CD4-positive, alpha-beta T cell (primary cell): ENCODE measurements at regions of chr6 and their contacts with region 1.

Region 1: GRCh38 chr6:89371849-89372505 is 19.5 kb upstream of the UBE2J1 start:
- DNase-seq: peak; percentile 64 to 89 (median 76)
- ATAC-seq: peak; percentile 65
- H3K4me3 ChIP-seq: no peak overlapping the region
- H3K4me3 Mint-ChIP-seq: no peak overlapping the region
- H3K27ac ChIP-seq: peak overlapping the region in 1 of 2 donors; percentile 32
- H3K27ac Mint-ChIP-seq: peak overlapping the region; percentile 79
- H3K4me1 ChIP-seq: peaks cover 17% of the 10 kb centered on the region
- H3K4me1 Mint-ChIP-seq: peaks cover 27% of the 10 kb centered on the region
- H3K27me3 ChIP-seq: no peaks in the 10 kb centered on the region
- H3K27me3 Mint-ChIP-seq: no peaks in the 10 kb centered on the region
- CTCF ChIP-seq: peak; percentile 97

Region 2: DNA sequence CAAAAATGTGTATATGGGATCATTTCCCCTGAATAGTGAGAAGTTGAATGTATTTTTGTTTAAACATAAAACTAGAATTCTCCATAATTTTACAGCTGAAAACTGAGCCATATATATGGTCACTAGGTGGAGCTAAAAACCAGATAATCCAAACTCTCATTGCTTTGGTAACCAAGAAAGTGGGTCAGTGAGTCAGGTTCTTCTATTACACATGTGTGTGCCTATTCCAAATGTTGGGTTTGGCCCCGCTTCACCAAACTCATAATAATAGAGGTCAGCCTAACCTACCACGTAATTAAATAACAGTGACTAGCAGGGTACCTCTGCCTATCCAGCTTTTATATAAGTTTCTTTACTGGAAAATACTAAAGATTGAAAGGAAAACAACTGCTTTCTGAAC is 389.3 kb before region 1 on chr6:
- CTCF ChIA-PET with region 1: interaction called, 11 read pairs
- POLR2A ChIA-PET with region 1: interaction called, 5 read pairs
- intact Hi-C with region 1: loop called (anchors 1 to 2 kb)
- DNase-seq: peak in 4 of 14 experiments; percentile 24 to 79 (median 75)
- ATAC-seq: peak; percentile 89
- H3K4me3 ChIP-seq: no peak overlapping the region
- H3K4me3 Mint-ChIP-seq: no peak overlapping the region
- H3K27ac ChIP-seq: no peak overlapping the region
- H3K27ac Mint-ChIP-seq: no peak overlapping the region
- H3K4me1 ChIP-seq: no peaks in the 10 kb centered on the region
- H3K4me1 Mint-ChIP-seq: no peaks in the 10 kb centered on the region
- H3K27me3 ChIP-seq: no peaks in the 10 kb centered on the region
- H3K27me3 Mint-ChIP-seq: no peaks in the 10 kb centered on the region
- CTCF ChIP-seq: peak; percentile 82

Region 3: DNA sequence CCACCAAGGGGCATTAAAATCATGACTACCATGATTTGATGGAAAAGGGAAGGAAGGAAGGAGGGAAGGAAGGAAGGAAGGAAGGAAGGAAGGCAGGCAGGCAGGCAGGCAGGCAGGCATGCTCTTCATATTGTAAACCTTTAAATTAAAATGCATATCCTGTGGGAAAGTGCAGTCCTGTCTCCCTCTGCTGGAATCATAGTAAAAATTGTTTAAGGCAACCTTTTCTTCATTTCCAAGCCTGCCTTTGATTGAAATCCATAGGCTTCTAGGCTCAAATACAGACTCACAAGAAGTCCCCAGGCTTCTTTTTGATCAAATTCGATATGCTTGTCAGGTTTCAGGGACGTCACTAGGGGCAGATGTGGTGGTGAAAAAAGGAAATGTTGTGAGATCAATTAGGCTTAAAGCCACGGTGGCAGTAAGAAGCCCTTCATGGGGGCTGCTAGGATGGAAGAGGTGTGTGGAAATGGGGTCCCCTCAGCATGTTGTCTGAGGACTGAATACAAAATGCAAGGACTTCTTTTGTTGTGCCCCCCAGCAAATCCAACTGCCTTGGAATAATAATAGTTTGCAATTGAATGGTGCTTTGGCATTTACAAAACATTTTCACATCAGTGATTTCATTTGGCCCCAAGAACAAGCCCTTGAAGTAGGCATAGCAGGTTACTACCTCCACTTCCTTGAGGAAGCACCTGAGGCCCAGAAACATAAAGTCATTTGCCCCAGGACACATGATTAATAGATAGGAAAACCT is 129.2 kb before region 1 on chr6:
- CTCF ChIA-PET with region 1: no interaction called
- POLR2A ChIA-PET with region 1: no interaction called
- intact Hi-C with region 1: no loop called
- DNase-seq: peak in 4 of 14 experiments; percentile 11 to 54 (median 49)
- ATAC-seq: peak; percentile 34
- H3K4me3 ChIP-seq: no peak overlapping the region
- H3K4me3 Mint-ChIP-seq: no peak overlapping the region
- H3K27ac ChIP-seq: no peak overlapping the region
- H3K27ac Mint-ChIP-seq: no peak overlapping the region
- H3K4me1 ChIP-seq: peaks cover 13% of the 10 kb centered on the region
- H3K4me1 Mint-ChIP-seq: peaks cover 20% of the 10 kb centered on the region
- H3K27me3 ChIP-seq: no peaks in the 10 kb centered on the region
- H3K27me3 Mint-ChIP-seq: peaks cover 8% of the 10 kb centered on the region
- CTCF ChIP-seq: peak; percentile 38

Region 4: GRCh38 chr6:89281779-89282246 is 90.2 kb before region 1 on chr6:
- CTCF ChIA-PET with region 1: interaction called, 5 read pairs
- POLR2A ChIA-PET with region 1: no interaction called
- intact Hi-C with region 1: loop called in 1 of 2 experiments (anchors 5 kb)
- DNase-seq: peak in 7 of 14 experiments; percentile 7 to 71 (median 35)
- ATAC-seq: peak; percentile 82
- H3K4me3 ChIP-seq: no peak overlapping the region
- H3K4me3 Mint-ChIP-seq: no peak overlapping the region
- H3K27ac ChIP-seq: no peak overlapping the region
- H3K27ac Mint-ChIP-seq: no peak overlapping the region
- H3K4me1 ChIP-seq: peaks cover 3% of the 10 kb centered on the region
- H3K4me1 Mint-ChIP-seq: no peaks in the 10 kb centered on the region
- H3K27me3 ChIP-seq: no peaks in the 10 kb centered on the region
- H3K27me3 Mint-ChIP-seq: no peaks in the 10 kb centered on the region
- CTCF ChIP-seq: peak; percentile 12

Region 5: DNA sequence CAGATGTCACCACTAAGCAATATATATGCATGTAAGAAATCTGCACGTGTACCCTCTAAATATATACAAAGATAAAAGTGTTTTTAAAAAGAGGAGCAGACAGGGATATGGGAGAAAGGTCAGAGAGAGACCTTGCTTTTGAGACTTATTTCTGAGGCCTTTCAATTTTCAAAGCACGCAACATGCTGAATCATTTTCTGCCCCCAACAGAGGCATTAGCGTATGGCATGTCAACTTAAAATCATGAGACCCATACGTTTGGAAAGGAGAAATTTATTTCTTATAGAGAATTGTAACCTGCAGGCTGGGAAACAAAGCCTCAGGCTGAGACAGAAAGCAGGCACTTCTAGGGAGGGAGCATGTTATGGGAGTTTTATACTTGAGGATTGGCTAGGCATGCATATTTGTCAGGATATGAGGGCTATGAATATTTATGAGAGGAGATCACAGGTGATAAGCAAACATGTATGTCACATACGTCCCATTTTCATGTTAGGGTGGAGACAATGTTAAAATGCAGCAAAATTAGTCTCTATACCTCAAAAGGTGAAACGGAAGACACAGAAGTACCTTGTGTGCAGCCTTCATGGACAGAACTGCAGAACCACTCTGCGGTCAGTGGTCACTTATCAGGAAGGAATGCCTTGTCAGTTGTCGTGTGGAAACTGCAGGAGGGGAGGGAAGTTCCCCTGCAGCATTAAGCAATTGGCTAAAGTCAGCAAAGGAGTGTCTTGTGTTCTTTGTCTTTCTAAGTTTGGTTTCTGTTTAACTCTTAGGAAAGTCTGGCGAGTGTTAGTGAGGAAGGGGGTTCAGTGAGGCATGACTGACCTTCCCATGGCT is 50.6 kb before region 1 on chr6:
- CTCF ChIA-PET with region 1: no interaction called
- POLR2A ChIA-PET with region 1: no interaction called
- intact Hi-C with region 1: no loop called
- DNase-seq: peak in 3 of 14 experiments; percentile 13 to 53 (median 45)
- ATAC-seq: no peak
- H3K4me3 ChIP-seq: no peak overlapping the region
- H3K4me3 Mint-ChIP-seq: no peak overlapping the region
- H3K27ac ChIP-seq: no peak overlapping the region
- H3K27ac Mint-ChIP-seq: no peak overlapping the region
- H3K4me1 ChIP-seq: no peaks in the 10 kb centered on the region
- H3K4me1 Mint-ChIP-seq: peaks cover 5% of the 10 kb centered on the region
- H3K27me3 ChIP-seq: no peaks in the 10 kb centered on the region
- H3K27me3 Mint-ChIP-seq: no peaks in the 10 kb centered on the region
- CTCF ChIP-seq: no peak

Region 6: DNA sequence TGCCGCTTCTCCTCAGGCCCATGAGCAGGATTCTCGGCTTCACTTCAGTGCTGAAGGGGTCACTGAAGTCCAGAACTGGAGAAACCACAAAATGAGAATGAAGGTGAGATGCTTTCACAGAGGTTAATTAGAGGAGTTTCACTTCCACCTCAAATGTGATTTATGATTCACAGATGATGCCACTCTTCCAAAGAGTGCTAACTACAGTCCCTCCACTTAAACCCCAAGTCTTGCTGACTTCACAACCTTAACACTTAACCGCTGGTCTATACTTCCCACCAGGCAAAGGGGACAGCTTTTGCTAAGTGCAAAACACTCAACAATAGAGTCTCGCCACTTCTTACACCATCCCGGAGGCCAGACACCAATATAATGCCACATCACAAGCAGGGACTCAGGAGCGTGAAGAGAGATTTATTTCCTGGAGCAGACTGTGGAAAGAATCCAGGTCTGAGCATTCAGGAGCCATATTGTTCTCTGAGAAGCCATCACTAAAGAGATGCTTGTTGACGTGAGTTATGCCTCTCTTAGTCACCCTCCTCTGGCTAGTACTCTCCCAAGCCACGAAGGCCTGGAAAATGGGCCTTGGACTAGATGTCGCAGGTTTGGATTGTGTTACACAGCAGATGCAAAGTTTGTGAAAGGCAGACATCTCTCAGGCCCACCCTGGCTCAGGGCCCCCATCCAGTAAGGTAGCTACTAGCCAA is 15.7 kb after region 1 on chr6:
- CTCF ChIA-PET with region 1: no interaction called
- POLR2A ChIA-PET with region 1: no interaction called
- intact Hi-C with region 1: no loop called
- DNase-seq: no peak
- ATAC-seq: no peak
- H3K4me3 ChIP-seq: no peak overlapping the region
- H3K4me3 Mint-ChIP-seq: no peak overlapping the region
- H3K27ac ChIP-seq: no peak overlapping the region
- H3K27ac Mint-ChIP-seq: no peak overlapping the region
- H3K4me1 ChIP-seq: no peaks in the 10 kb centered on the region
- H3K4me1 Mint-ChIP-seq: no peaks in the 10 kb centered on the region
- H3K27me3 ChIP-seq: no peaks in the 10 kb centered on the region
- H3K27me3 Mint-ChIP-seq: no peaks in the 10 kb centered on the region
- CTCF ChIP-seq: no peak

Region 7: GRCh38 chr6:89412071-89413005 is 40.4 kb after region 1 on chr6 and contains the start of gene RRAGD:
- CTCF ChIA-PET with region 1: interaction called, 5 read pairs
- POLR2A ChIA-PET with region 1: interaction called, 3 read pairs
- intact Hi-C with region 1: loop called in 1 of 2 experiments (anchors 5 kb)
- DNase-seq: peak in 13 of 14 experiments; percentile 29 to 85 (median 58)
- ATAC-seq: peak; percentile 79
- H3K4me3 ChIP-seq: peak within 1 kb of the TSS; percentile 72
- H3K4me3 Mint-ChIP-seq: peak within 1 kb of the TSS; percentile 100
- H3K27ac ChIP-seq: no peak within 1 kb of the TSS
- H3K27ac Mint-ChIP-seq: peak within 1 kb of the TSS; percentile 78
- H3K4me1 ChIP-seq: peaks cover 20% of the 10 kb centered on the region
- H3K4me1 Mint-ChIP-seq: peaks cover 14% of the 10 kb centered on the region
- H3K27me3 ChIP-seq: peaks cover 0 to 4% of the 10 kb centered on the region in 2 experiments
- H3K27me3 Mint-ChIP-seq: peaks cover 15% of the 10 kb centered on the region
- CTCF ChIP-seq: no peak
- total RNA-seq, gene RRAGD: 9.0 to 10.2 TPM

Region 8: DNA sequence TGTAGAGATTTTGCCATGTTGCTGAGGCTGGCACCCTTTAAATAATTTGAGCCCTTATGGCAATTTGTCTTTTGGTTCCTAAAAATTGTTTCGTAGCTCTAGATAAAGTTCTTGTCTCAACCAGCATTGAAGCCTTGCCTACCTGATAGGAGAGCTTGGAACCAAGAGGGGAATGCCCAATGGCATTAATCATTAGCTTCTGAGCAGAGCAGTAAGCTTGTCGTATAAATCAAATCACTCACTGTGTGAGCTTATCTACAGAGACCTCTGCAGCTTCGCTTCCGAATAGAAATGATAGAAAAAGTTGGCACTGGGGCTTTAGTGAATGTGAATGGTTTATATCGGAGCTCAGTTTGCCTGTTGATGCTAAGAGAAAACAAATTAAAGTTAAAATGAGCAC is 71.7 kb after region 1 on chr6:
- CTCF ChIA-PET with region 1: no interaction called
- POLR2A ChIA-PET with region 1: no interaction called
- intact Hi-C with region 1: no loop called
- DNase-seq: no peak
- ATAC-seq: no peak
- H3K4me3 ChIP-seq: no peak overlapping the region
- H3K4me3 Mint-ChIP-seq: no peak overlapping the region
- H3K27ac ChIP-seq: no peak overlapping the region
- H3K27ac Mint-ChIP-seq: no peak overlapping the region
- H3K4me1 ChIP-seq: no peaks in the 10 kb centered on the region
- H3K4me1 Mint-ChIP-seq: no peaks in the 10 kb centered on the region
- H3K27me3 ChIP-seq: no peaks in the 10 kb centered on the region
- H3K27me3 Mint-ChIP-seq: no peaks in the 10 kb centered on the region
- CTCF ChIP-seq: no peak

Region 9: GRCh38 chr6:89610149-89610642 is 238.2 kb after region 1 on chr6:
- CTCF ChIA-PET with region 1: interaction called, 7 read pairs
- POLR2A ChIA-PET with region 1: no interaction called
- intact Hi-C with region 1: loop called (anchors 1 to 2 kb)
- DNase-seq: peak; percentile 67 to 87 (median 75)
- ATAC-seq: peak; percentile 77
- H3K4me3 ChIP-seq: no peak overlapping the region
- H3K4me3 Mint-ChIP-seq: no peak overlapping the region
- H3K27ac ChIP-seq: no peak overlapping the region
- H3K27ac Mint-ChIP-seq: no peak overlapping the region
- H3K4me1 ChIP-seq: no peaks in the 10 kb centered on the region
- H3K4me1 Mint-ChIP-seq: no peaks in the 10 kb centered on the region
- H3K27me3 ChIP-seq: no peaks in the 10 kb centered on the region
- H3K27me3 Mint-ChIP-seq: no peaks in the 10 kb centered on the region
- CTCF ChIP-seq: peak; percentile 86